ENCODE measurements at regions of chr19 and their contacts with region 1.

Region 1: DNA sequence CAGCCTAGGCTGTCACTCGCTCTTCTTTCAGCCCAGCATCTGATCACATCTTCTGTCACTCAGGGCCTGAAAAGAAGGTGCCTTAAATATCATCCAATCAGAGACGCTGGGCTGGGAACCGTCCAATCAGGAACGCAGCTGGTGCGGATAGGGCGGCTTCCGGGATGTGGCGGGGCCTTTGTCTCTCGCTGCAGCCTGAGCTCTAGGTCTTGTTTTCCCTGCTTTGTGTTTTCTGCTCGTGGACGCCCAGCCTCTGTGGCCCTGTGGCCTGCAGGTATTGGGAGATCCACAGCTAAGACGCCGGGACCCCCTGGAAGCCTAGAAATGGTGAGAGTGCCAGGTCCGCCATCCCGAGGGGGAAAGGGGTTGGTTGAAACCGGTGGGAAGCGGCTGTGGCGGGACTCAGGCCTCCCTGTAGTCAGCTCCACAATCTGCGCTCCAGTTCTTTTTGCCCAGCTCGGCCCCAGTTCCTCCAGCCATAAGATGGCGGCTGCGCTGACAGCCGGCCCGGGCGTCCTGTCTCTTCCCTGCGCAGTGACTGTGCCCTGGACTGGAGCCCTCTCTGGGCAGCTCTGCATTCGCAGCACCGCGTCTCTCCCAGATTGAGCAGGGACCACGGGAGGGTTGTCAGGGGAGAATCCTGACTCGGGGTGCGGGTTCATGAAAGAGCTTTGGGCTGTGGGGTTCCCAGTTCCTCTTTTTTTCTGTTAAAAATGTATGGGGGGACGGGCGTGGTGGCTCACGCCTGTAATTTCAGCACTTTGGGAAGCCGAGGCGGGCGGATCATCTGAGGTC is at the start of gene ZNF85:
- DNase-seq: peak; percentile 89 to 94
- ATAC-seq: peak; percentile 96 to 99 (median 99)
- H3K4me3 ChIP-seq: peak within 1 kb of the TSS; percentile 73
- H3K4me3 Mint-ChIP-seq: peak within 1 kb of the TSS; percentile 97
- H3K27ac ChIP-seq: peak within 1 kb of the TSS; percentile 91
- H3K27ac Mint-ChIP-seq: peak within 1 kb of the TSS; percentile 91 to 98
- H3K4me1 ChIP-seq: peaks cover 11% of the 10 kb centered on the region
- H3K4me1 Mint-ChIP-seq: peaks cover 19% of the 10 kb centered on the region in 2 donors
- H3K27me3 ChIP-seq: no peaks in the 10 kb centered on the region
- H3K27me3 Mint-ChIP-seq: no peaks in the 10 kb centered on the region
- CTCF ChIP-seq: no peak
- total RNA-seq, gene ZNF85: 3.9 to 8.6 (median 5.4) TPM

Region 2: DNA sequence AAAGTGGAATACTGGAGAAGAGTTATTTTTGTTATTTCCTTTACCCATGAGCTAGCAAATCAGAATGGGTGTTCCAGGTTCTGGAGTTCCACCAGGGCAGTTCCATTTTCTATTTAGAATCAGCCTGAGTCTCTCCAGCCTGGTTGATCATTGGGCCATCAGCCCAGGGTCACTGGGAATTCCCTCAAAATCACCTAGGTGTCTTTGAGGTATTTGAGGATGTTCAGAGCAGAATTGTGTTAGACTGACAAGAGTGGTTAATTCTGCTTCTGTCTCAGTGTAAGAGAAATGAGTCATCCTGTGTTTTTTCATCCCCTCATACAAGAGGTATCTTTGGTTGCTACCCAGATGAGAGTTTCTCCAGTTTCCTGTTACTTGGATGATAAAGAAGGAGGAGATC is 135.5 kb before region 1 on chr19:
- intact Hi-C with region 1: no loop called
- DNase-seq: no peak
- ATAC-seq: no peak
- H3K4me3 ChIP-seq: no peak overlapping the region
- H3K4me3 Mint-ChIP-seq: no peak overlapping the region
- H3K27ac ChIP-seq: no peak overlapping the region
- H3K27ac Mint-ChIP-seq: no peak overlapping the region
- H3K4me1 ChIP-seq: no peaks in the 10 kb centered on the region
- H3K4me1 Mint-ChIP-seq: peaks cover 0 to 24% of the 10 kb centered on the region in 2 donors
- H3K27me3 ChIP-seq: no peaks in the 10 kb centered on the region
- H3K27me3 Mint-ChIP-seq: no peaks in the 10 kb centered on the region
- CTCF ChIP-seq: no peak

Region 3: GRCh38 chr19:21020298-21021227 is 97.3 kb after region 1 on chr19 and contains the start of gene ZNF430:
- intact Hi-C with region 1: loop called (anchors 10 kb)
- DNase-seq: peak; percentile 92 to 96
- ATAC-seq: peak; percentile 94 to 99 (median 97)
- H3K4me3 ChIP-seq: peak within 1 kb of the TSS; percentile 98
- H3K4me3 Mint-ChIP-seq: peak within 1 kb of the TSS; percentile 100
- H3K27ac ChIP-seq: peak within 1 kb of the TSS; percentile 97
- H3K27ac Mint-ChIP-seq: peak within 1 kb of the TSS; percentile 99 to 100
- H3K4me1 ChIP-seq: peaks cover 19% of the 10 kb centered on the region
- H3K4me1 Mint-ChIP-seq: peaks cover 37 to 39% of the 10 kb centered on the region in 2 donors
- H3K27me3 ChIP-seq: no peaks in the 10 kb centered on the region
- H3K27me3 Mint-ChIP-seq: no peaks in the 10 kb centered on the region
- CTCF ChIP-seq: no peak
- total RNA-seq, gene ZNF430: 32.7 to 43.0 (median 33.3) TPM

Region 4: DNA sequence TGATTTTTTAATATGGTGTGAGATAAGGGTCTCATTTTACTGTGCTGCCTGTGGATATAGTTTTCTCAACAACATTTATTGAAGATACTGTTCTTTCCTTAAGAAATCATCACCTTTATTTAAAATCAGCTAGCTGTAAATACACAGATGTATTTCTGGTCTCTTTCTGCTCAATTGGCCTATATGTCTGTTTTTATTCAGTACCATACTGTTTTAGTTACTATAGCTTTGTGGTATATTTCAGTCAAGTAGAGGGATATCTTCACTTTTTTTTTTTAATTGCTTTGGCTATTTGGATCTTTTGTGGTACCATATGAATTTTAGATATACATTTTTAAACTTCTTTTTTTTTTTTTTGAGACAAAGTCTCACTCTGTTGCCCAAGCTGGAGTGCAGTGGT is 142.1 kb after region 1 on chr19:
- intact Hi-C with region 1: no loop called
- DNase-seq: no peak
- ATAC-seq: no peak
- H3K4me3 ChIP-seq: no peak overlapping the region
- H3K4me3 Mint-ChIP-seq: no peak overlapping the region
- H3K27ac ChIP-seq: no peak overlapping the region
- H3K27ac Mint-ChIP-seq: no peak overlapping the region
- H3K4me1 ChIP-seq: no peaks in the 10 kb centered on the region
- H3K4me1 Mint-ChIP-seq: no peaks in the 10 kb centered on the region
- H3K27me3 ChIP-seq: no peaks in the 10 kb centered on the region
- H3K27me3 Mint-ChIP-seq: no peaks in the 10 kb centered on the region
- CTCF ChIP-seq: no peak